ENCODE measurements at regions of chr6 and their contacts with region 1.

Region 1: DNA sequence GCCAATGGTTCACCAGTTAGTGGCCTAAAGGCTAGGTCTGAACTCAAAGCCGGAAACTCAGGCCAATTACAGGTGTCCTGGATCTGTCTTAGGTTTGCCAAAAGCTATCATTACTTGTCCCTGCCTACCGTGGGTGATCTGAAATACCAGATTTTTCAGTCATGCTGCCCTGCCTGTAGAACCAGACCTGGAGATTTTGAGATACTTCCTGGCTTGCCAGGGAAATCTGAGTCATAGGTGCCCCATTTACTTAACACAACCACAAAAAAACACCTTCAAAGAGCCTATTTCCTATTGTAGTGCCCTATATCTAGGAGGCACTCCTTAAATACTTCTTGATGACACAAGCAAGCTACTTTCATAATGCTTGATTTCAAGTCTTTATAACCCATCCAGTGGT is 13.9 kb upstream of the RANBP9 start:
- DNase-seq: peak; percentile 86 to 100
- H3K4me3 ChIP-seq: peak overlapping the region; percentile 47; the same call in 1 of the 2 replicates
- H3K27ac ChIP-seq: peak overlapping the region; percentile 96
- H3K4me1 ChIP-seq: peaks cover 88% of the 10 kb centered on the region
- H3K27me3 ChIP-seq: no peaks in the 10 kb centered on the region
- CTCF ChIP-seq: no peak

Region 2: GRCh38 chr6:13355043-13355951 is 370.3 kb before region 1 on chr6:
- CTCF ChIA-PET with region 1: no interaction called
- POLR2A ChIA-PET with region 1: interaction called, 9 read pairs
- intact Hi-C with region 1: loop called (anchors 1 kb)
- DNase-seq: peak; percentile 63 to 99
- H3K4me3 ChIP-seq: peak overlapping the region; percentile 10; the same call in 1 of the 2 replicates
- H3K27ac ChIP-seq: peak overlapping the region; percentile 74
- H3K4me1 ChIP-seq: peaks cover 38% of the 10 kb centered on the region
- H3K27me3 ChIP-seq: no peaks in the 10 kb centered on the region
- CTCF ChIP-seq: no peak

Region 3: GRCh38 chr6:13574149-13574570 is 151.4 kb before region 1 on chr6:
- CTCF ChIA-PET with region 1: no interaction called
- POLR2A ChIA-PET with region 1: interaction called, 3 read pairs
- intact Hi-C with region 1: loop called (anchors 1 kb)
- DNase-seq: peak; percentile 80 to 96
- H3K4me3 ChIP-seq: peak overlapping the region; percentile 92
- H3K27ac ChIP-seq: peak overlapping the region; percentile 96
- H3K4me1 ChIP-seq: peaks cover 17% of the 10 kb centered on the region
- H3K27me3 ChIP-seq: no peaks in the 10 kb centered on the region
- CTCF ChIP-seq: peak; percentile 52

Region 4: GRCh38 chr6:13766201-13766634 is 40.6 kb after region 1 on chr6:
- CTCF ChIA-PET with region 1: interaction called, 18 read pairs
- POLR2A ChIA-PET with region 1: interaction called, 8 read pairs
- intact Hi-C with region 1: loop called (anchors 1 kb)
- DNase-seq: peak; percentile 37 to 54
- H3K4me3 ChIP-seq: no peak overlapping the region
- H3K27ac ChIP-seq: peak overlapping the region; percentile 30
- H3K4me1 ChIP-seq: peaks cover 12% of the 10 kb centered on the region
- H3K27me3 ChIP-seq: no peaks in the 10 kb centered on the region
- CTCF ChIP-seq: no peak

Region 5: GRCh38 chr6:13814176-13814937 is 88.8 kb after region 1 on chr6 and contains the start of gene MCUR1:
- CTCF ChIA-PET with region 1: no interaction called
- POLR2A ChIA-PET with region 1: interaction called, 13 read pairs
- intact Hi-C with region 1: loop called (anchors 5 kb)
- DNase-seq: peak; percentile 63 to 89
- H3K4me3 ChIP-seq: peak within 1 kb of the TSS; percentile 57
- H3K27ac ChIP-seq: peak within 1 kb of the TSS; percentile 66
- H3K4me1 ChIP-seq: peaks cover 34% of the 10 kb centered on the region
- H3K27me3 ChIP-seq: no peaks in the 10 kb centered on the region
- CTCF ChIP-seq: no peak
- total RNA-seq, gene MCUR1: 38.8 and 45.9 TPM in 2 replicates

Measured in PC-9 (cell line).